HepG2 (cell line): ENCODE measurements at regions of chrX and their contacts with region 1.

Region 1: GRCh38 chrX:109485470-109486340 is 3.8 kb upstream of the GUCY2F start:
- DNase-seq: peak; percentile 47
- ATAC-seq: no peak; the same call in 2 of the 3 replicates
- H3K4me3 ChIP-seq: no peak overlapping the region
- H3K27ac ChIP-seq: no peak overlapping the region
- H3K4me1 ChIP-seq: peaks cover 17% of the 10 kb centered on the region
- H3K27me3 ChIP-seq: no peaks in the 10 kb centered on the region
- CTCF ChIP-seq: peak; percentile 80
- EP300 ChIP-seq: no peak
- POLR2A ChIP-seq: no peak
- RAD21 ChIP-seq: peak; percentile 61; the same call in 1 of the 2 replicates

Region 2: GRCh38 chrX:109626637-109627036 is 140.9 kb after region 1 on chrX:
- CTCF ChIA-PET with region 1: no interaction called
- POLR2A ChIA-PET with region 1: no interaction called
- in situ Hi-C with region 1: loop called (anchors 5 kb)
- intact Hi-C with region 1: loop called (anchors 2 kb)
- DNase-seq: no peak
- ATAC-seq: peak; percentile 39
- H3K4me3 ChIP-seq: no peak overlapping the region
- H3K27ac ChIP-seq: peak overlapping the region; percentile 43
- H3K4me1 ChIP-seq: peaks cover 20% of the 10 kb centered on the region
- H3K27me3 ChIP-seq: no peaks in the 10 kb centered on the region
- CTCF ChIP-seq: no peak
- EP300 ChIP-seq: no peak
- POLR2A ChIP-seq: no peak
- RAD21 ChIP-seq: no peak

Region 3: DNA sequence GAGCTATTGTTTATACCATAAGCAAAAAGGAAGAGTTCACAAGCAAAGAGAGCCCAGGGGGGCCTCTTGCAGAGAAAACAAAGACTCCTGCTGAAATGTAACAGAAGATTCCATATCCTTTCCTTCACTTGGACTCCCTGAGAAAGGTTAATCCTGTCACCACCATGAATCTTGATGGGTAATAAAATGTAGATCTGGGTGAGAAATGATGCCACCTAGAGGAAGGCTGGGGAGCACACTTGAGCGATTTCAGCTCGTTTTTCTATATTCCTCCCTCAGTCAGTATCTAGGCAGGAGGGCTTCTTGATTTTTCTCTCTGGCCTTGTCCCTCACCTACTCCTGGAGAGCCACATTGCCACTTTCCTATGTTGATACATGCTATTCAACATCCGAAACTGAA is 149.5 kb after region 1 on chrX:
- CTCF ChIA-PET with region 1: interaction called, 9 read pairs
- POLR2A ChIA-PET with region 1: no interaction called
- in situ Hi-C with region 1: loop called (anchors 5 kb)
- intact Hi-C with region 1: loop called (anchors 2 kb)
- DNase-seq: no peak
- ATAC-seq: peak; percentile 39
- H3K4me3 ChIP-seq: no peak overlapping the region
- H3K27ac ChIP-seq: no peak overlapping the region
- H3K4me1 ChIP-seq: no peaks in the 10 kb centered on the region
- H3K27me3 ChIP-seq: no peaks in the 10 kb centered on the region
- CTCF ChIP-seq: peak; percentile 44
- EP300 ChIP-seq: no peak
- POLR2A ChIP-seq: no peak
- RAD21 ChIP-seq: no peak